ENCODE measurements at regions of chrX and their contacts with region 1.

Region 1: DNA sequence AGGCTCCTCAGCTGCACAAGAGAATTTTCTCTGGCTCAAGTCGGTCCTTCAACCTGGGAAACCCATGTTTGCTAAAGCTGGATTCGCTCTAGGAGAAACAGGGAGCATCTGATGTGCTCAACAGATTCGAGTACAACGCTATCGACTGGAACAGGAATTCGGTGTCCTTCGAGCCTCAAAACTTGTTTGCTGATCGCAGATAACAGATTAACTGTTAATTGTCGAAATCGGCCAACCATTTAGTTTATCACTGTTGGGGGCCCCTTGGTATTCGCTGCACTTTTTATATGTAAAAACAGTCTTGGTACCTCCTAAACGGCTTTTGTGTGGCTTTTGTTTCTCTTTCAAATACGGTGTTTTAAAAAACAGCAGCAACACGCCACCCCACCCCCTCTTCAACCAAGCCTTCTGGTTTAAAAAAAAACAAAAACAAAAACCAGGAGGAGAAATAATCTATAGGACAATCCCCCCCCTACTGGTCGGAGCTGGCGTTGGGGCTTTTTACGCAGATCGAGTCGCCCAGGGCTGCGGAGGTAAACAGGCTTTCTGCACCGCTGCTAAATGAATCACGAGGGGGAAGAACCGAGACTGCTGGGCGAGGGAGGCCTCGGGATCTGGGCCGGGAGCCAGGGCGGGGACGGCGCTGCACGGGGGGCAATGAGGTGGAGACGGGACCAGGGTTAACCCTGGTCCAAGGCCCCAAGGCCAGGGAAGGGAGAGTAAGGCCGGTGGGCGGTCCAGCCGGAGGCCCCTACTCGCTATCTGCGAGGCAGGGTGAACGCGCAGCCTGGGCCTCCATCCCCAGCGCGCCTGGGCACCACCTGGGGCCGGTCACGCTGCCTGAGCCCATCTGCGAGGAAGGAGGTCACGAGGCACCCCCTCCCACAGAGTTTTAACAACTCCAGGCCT is 71.7 kb upstream of the BCOR start:
- DNase-seq: peak; percentile 40
- H3K4me3 ChIP-seq: no peak overlapping the region
- H3K27ac ChIP-seq: no peak overlapping the region
- H3K4me1 ChIP-seq: no peaks in the 10 kb centered on the region
- H3K27me3 ChIP-seq: no peaks in the 10 kb centered on the region
- CTCF ChIP-seq: peak in 1 of 4 experiments; percentile 23
- POLR2A ChIP-seq: no peak

Region 2: GRCh38 chrX:38803586-38804431 is 1365.6 kb before region 1 on chrX:
- intact Hi-C with region 1: loop called (anchors 5 kb)
- DNase-seq: peak; percentile 68
- H3K4me3 ChIP-seq: peak overlapping the region; percentile 47
- H3K27ac ChIP-seq: peak overlapping the region; percentile 84 to 86
- H3K4me1 ChIP-seq: no peaks in the 10 kb centered on the region
- H3K27me3 ChIP-seq: no peaks in the 10 kb centered on the region
- CTCF ChIP-seq: no peak
- POLR2A ChIP-seq: peak; percentile 76

Region 3: GRCh38 chrX:39309721-39310152 is 859.7 kb before region 1 on chrX:
- intact Hi-C with region 1: no loop called
- DNase-seq: no peak
- H3K4me3 ChIP-seq: no peak overlapping the region
- H3K27ac ChIP-seq: no peak overlapping the region
- H3K4me1 ChIP-seq: no peaks in the 10 kb centered on the region
- H3K27me3 ChIP-seq: no peaks in the 10 kb centered on the region
- CTCF ChIP-seq: no peak
- POLR2A ChIP-seq: no peak

Region 4: DNA sequence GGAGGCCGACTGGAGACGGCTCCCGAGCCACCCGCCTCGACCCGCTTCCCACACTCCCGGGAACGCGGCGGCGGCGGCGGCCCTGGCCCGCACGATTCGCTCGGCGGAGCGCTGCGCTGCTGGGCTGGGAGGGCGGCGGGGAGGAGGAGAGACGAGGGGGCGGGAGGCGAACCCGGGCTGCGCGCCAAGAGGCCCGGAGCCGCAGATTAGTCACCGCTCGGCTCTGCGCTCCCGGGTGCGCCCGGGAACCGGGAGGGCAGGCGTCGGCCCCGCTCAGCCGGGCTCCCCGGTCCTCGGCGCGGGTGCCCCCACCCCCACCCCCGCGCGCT is 60.5 kb before region 1 on chrX:
- intact Hi-C with region 1: loop called (anchors 5 kb)
- DNase-seq: peak; percentile 72
- H3K4me3 ChIP-seq: peak overlapping the region; percentile 51 to 61
- H3K27ac ChIP-seq: peak overlapping the region; percentile 86 to 95
- H3K4me1 ChIP-seq: no peaks in the 10 kb centered on the region
- H3K27me3 ChIP-seq: no peaks in the 10 kb centered on the region
- CTCF ChIP-seq: no peak
- POLR2A ChIP-seq: peak; percentile 44

Region 5: DNA sequence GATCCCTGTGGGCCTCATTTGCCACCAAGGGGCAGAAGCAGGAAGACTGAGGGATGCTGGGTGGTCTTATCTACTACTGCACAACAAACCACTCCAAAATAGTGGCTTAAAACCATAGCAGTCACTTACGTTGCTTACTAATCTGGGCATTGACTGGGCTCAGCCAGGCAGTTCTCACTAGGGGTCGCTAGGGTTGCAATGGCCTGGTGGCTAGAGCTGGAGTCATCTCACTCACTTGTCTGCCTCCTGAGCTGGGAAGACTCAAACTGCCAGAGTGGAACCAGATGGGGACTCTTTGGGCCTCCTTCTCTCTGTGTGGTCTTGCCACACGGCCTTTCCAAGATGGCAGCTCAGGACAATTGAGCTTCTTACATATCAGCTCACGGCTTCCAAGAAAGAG is 144.6 kb after region 1 on chrX:
- intact Hi-C with region 1: no loop called
- DNase-seq: no peak
- H3K4me3 ChIP-seq: no peak overlapping the region
- H3K27ac ChIP-seq: no peak overlapping the region
- H3K4me1 ChIP-seq: no peaks in the 10 kb centered on the region
- H3K27me3 ChIP-seq: no peaks in the 10 kb centered on the region
- CTCF ChIP-seq: peak in 2 of 4 experiments; percentile 15 to 20
- POLR2A ChIP-seq: no peak

Measured in prostate gland (tissue), 2 donors.